Mammary epithelial cell (primary cell): ENCODE measurements at regions of chr12 and their contacts with region 1.

Region 1: GRCh38 chr12:23055004-23055403 is 430.0 kb downstream of the ETNK1 start:
- DNase-seq: peak; percentile 54
- H3K4me3 ChIP-seq: no peak overlapping the region
- H3K27ac ChIP-seq: no peak overlapping the region
- H3K4me1 ChIP-seq: no peaks in the 10 kb centered on the region
- H3K27me3 ChIP-seq: no peaks in the 10 kb centered on the region
- CTCF ChIP-seq: peak; percentile 75

Region 2: GRCh38 chr12:22684140-22685118 is 370.6 kb before region 1 on chr12:
- CTCF ChIA-PET with region 1: no interaction called
- dilution Hi-C with region 1: no loop called
- in situ Hi-C with region 1: no loop called
- intact Hi-C with region 1: loop called (anchors 5 kb)
- DNase-seq: peak; percentile 14
- H3K4me3 ChIP-seq: no peak overlapping the region
- H3K27ac ChIP-seq: no peak overlapping the region
- H3K4me1 ChIP-seq: peaks cover 9% of the 10 kb centered on the region
- H3K27me3 ChIP-seq: no peaks in the 10 kb centered on the region
- CTCF ChIP-seq: peak; percentile 63 to 65

Region 3: GRCh38 chr12:22981711-22982110 is 73.3 kb before region 1 on chr12:
- CTCF ChIA-PET with region 1: no interaction called
- dilution Hi-C with region 1: no loop called
- in situ Hi-C with region 1: no loop called
- intact Hi-C with region 1: loop called (anchors 5 kb)
- DNase-seq: peak; percentile 15
- H3K4me3 ChIP-seq: no peak overlapping the region
- H3K27ac ChIP-seq: no peak overlapping the region
- H3K4me1 ChIP-seq: peaks cover 22% of the 10 kb centered on the region
- H3K27me3 ChIP-seq: no peaks in the 10 kb centered on the region
- CTCF ChIP-seq: peak; percentile 29 to 47